ENCODE measurements at regions of chr4 and their contacts with region 1.

Region 1: GRCh38 chr4:46648088-46648744 is 258.3 kb upstream of the GABRA2 start:
- DNase-seq: peak; percentile 80 to 82
- H3K4me3 ChIP-seq: no peak overlapping the region
- H3K4me3 Mint-ChIP-seq: no peak overlapping the region
- H3K27ac Mint-ChIP-seq: peak overlapping the region; percentile 71
- H3K4me1 ChIP-seq: peaks cover 7% of the 10 kb centered on the region
- H3K4me1 Mint-ChIP-seq: no peaks in the 10 kb centered on the region
- H3K27me3 ChIP-seq: no peaks in the 10 kb centered on the region
- H3K27me3 Mint-ChIP-seq: no peaks in the 10 kb centered on the region
- CTCF ChIP-seq: peak; percentile 73 to 78

Region 2: DNA sequence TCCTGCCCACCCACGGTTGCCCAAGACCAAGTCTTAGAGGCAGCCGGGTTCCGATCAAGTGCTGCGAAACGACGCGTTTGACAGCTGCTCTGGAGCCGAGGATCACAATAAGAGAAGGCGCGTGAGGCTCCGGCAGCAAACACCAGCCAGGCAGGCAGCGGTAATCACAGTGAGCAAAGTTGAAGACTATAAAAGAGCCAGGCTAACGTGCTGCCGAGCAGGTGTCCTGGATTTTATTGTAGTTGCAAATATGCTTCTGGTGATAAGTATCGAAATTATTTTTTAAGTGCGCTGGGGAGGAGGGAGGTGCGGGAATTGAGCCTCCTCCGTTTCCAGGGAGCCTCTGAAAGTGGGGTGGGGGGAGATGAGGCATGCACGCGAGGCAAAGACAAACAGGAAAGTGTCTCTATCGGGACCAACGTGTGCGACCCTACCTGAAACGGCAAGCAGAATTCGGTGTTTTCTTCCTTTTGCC is 258.9 kb before region 1 on chr4:
- CTCF ChIA-PET with region 1: interaction called, 6 read pairs
- POLR2A ChIA-PET with region 1: no interaction called
- intact Hi-C with region 1: loop called (anchors 1 kb)
- DNase-seq: peak; percentile 36 to 39
- H3K4me3 ChIP-seq: peak overlapping the region; percentile 44
- H3K4me3 Mint-ChIP-seq: peak overlapping the region; percentile 85
- H3K27ac Mint-ChIP-seq: peak overlapping the region; percentile 56
- H3K4me1 ChIP-seq: 0 out of 2 replicates have a peak, but pooled peaks cover 6% of the 10 kb centered on the region
- H3K4me1 Mint-ChIP-seq: peaks cover 12% of the 10 kb centered on the region
- H3K27me3 ChIP-seq: peaks cover 1% of the 10 kb centered on the region; the same call in 1 of the 2 replicates
- H3K27me3 Mint-ChIP-seq: peaks cover 16% of the 10 kb centered on the region
- CTCF ChIP-seq: no peak

Region 3: GRCh38 chr4:46462733-46463132 is 185.5 kb before region 1 on chr4:
- CTCF ChIA-PET with region 1: interaction called, 3 read pairs
- POLR2A ChIA-PET with region 1: no interaction called
- intact Hi-C with region 1: loop called (anchors 10 kb)
- DNase-seq: no peak
- H3K4me3 ChIP-seq: no peak overlapping the region
- H3K4me3 Mint-ChIP-seq: no peak overlapping the region
- H3K27ac Mint-ChIP-seq: no peak overlapping the region
- H3K4me1 ChIP-seq: no peaks in the 10 kb centered on the region
- H3K4me1 Mint-ChIP-seq: no peaks in the 10 kb centered on the region
- H3K27me3 ChIP-seq: no peaks in the 10 kb centered on the region
- H3K27me3 Mint-ChIP-seq: no peaks in the 10 kb centered on the region
- CTCF ChIP-seq: no peak

Region 4: GRCh38 chr4:46549125-46549524 is 99.1 kb before region 1 on chr4:
- CTCF ChIA-PET with region 1: no interaction called
- POLR2A ChIA-PET with region 1: no interaction called
- intact Hi-C with region 1: loop called (anchors 5 kb)
- DNase-seq: no peak
- H3K4me3 ChIP-seq: no peak overlapping the region
- H3K4me3 Mint-ChIP-seq: no peak overlapping the region
- H3K27ac Mint-ChIP-seq: no peak overlapping the region
- H3K4me1 ChIP-seq: peaks cover 16% of the 10 kb centered on the region; the same call in 1 of the 2 replicates
- H3K4me1 Mint-ChIP-seq: peaks cover 10% of the 10 kb centered on the region
- H3K27me3 ChIP-seq: no peaks in the 10 kb centered on the region
- H3K27me3 Mint-ChIP-seq: no peaks in the 10 kb centered on the region
- CTCF ChIP-seq: no peak

Region 5: DNA sequence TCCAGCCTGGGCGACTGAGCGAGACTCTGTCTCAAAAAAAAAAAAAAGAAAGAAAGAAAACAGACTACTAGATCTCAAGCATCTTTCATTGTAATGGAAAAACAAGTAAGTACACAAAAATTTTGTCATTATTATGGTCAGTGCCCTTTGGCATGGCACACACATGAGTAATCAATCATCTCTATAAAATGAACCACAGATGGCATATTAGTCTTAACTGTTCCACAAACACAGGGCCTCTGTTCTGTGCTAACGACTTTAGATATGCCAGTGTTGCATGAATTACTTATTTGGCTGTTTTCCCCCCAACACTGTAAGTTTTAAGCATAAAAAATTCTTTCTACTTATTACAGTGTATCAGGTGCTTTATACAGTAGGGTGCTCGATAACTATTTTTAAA is 170.4 kb after region 1 on chr4:
- CTCF ChIA-PET with region 1: no interaction called
- POLR2A ChIA-PET with region 1: no interaction called
- intact Hi-C with region 1: no loop called
- DNase-seq: no peak
- H3K4me3 ChIP-seq: no peak overlapping the region
- H3K4me3 Mint-ChIP-seq: no peak overlapping the region
- H3K27ac Mint-ChIP-seq: no peak overlapping the region
- H3K4me1 ChIP-seq: no peaks in the 10 kb centered on the region
- H3K4me1 Mint-ChIP-seq: no peaks in the 10 kb centered on the region
- H3K27me3 ChIP-seq: no peaks in the 10 kb centered on the region
- H3K27me3 Mint-ChIP-seq: no peaks in the 10 kb centered on the region
- CTCF ChIP-seq: no peak

Region 6: DNA sequence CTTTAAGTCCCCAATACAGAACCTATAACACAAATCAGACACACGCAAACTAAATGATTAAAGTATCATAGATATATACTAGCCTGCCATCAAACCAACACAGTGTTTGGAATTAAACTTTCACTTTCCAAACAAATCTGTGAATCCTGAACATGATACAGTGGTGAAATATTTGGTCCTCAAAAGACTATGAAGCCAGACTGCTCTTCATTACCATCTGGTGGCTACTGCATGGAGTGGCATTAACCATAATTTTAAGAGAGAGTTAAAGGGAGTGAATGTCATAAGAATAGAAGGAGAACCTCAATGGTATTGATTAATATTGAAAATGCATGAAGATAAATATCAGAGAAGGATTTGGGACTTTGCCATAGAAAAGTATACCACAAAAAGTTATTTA is 354.4 kb after region 1 on chr4:
- CTCF ChIA-PET with region 1: interaction called, 3 read pairs
- POLR2A ChIA-PET with region 1: no interaction called
- intact Hi-C with region 1: loop called (anchors 1 kb)
- DNase-seq: peak in 1 of 2 experiments; percentile 7
- H3K4me3 ChIP-seq: no peak overlapping the region
- H3K4me3 Mint-ChIP-seq: no peak overlapping the region
- H3K27ac Mint-ChIP-seq: no peak overlapping the region
- H3K4me1 ChIP-seq: peaks cover 4% of the 10 kb centered on the region; the same call in 1 of the 2 replicates
- H3K4me1 Mint-ChIP-seq: peaks cover 4% of the 10 kb centered on the region
- H3K27me3 ChIP-seq: no peaks in the 10 kb centered on the region
- H3K27me3 Mint-ChIP-seq: no peaks in the 10 kb centered on the region
- CTCF ChIP-seq: peak; percentile 42 to 53

Measured in Caco-2 (cell line).